GM12878 (cell line): ENCODE measurements at regions of chr4 and their contacts with region 1.

Region 1: DNA sequence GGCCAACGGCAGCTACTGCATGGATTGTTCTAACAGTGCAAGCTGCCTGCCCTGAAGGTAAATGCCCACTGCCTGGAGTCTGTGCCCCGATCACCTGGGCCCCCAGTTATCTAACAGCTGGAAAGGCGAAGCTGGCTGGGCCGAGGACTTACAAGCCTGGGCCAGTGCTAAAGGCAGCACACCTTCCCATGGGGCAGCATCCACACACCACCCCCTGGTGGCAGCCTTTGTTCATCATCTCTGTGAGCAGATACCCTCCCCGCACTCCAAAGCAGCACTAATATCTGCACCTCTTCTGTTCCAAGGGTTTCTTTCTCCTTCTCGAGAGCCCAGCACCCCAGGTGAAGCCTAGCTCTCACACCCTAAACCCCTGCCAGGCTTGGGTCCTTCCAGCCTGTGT is 7.6 kb downstream of the SLC2A9 start:
- DNase-seq: no peak
- ATAC-seq: peak; percentile 86
- H3K4me3 ChIP-seq: no peak overlapping the region
- H3K27ac ChIP-seq: no peak overlapping the region
- H3K4me1 ChIP-seq: peaks cover 8% of the 10 kb centered on the region; the same call in 1 of the 2 replicates
- H3K27me3 ChIP-seq: no peaks in the 10 kb centered on the region
- CTCF ChIP-seq: peak; percentile 72 to 78 (median 76)
- EP300 ChIP-seq: no peak
- POLR2A ChIP-seq: no peak
- RAD21 ChIP-seq: peak; percentile 80

Region 2: GRCh38 chr4:9762823-9763475 is 250.8 kb before region 1 on chr4:
- CTCF ChIA-PET with region 1: interaction called, 325 read pairs
- POLR2A ChIA-PET with region 1: interaction called, 3 read pairs
- RAD21 ChIA-PET with region 1: interaction called, 185 read pairs
- SMC1A ChIA-PET with region 1: interaction called, 159 read pairs
- in situ Hi-C with region 1: loop called (anchors 5 kb)
- intact Hi-C with region 1: loop called (anchors 1 kb)
- DNase-seq: peak; percentile 40
- ATAC-seq: peak; percentile 75
- H3K4me3 ChIP-seq: no peak overlapping the region
- H3K27ac ChIP-seq: no peak overlapping the region
- H3K4me1 ChIP-seq: no peaks in the 10 kb centered on the region
- H3K27me3 ChIP-seq: no peaks in the 10 kb centered on the region
- CTCF ChIP-seq: peak; percentile 69 to 88 (median 75)
- EP300 ChIP-seq: no peak
- POLR2A ChIP-seq: no peak
- RAD21 ChIP-seq: peak; percentile 99

Region 3: DNA sequence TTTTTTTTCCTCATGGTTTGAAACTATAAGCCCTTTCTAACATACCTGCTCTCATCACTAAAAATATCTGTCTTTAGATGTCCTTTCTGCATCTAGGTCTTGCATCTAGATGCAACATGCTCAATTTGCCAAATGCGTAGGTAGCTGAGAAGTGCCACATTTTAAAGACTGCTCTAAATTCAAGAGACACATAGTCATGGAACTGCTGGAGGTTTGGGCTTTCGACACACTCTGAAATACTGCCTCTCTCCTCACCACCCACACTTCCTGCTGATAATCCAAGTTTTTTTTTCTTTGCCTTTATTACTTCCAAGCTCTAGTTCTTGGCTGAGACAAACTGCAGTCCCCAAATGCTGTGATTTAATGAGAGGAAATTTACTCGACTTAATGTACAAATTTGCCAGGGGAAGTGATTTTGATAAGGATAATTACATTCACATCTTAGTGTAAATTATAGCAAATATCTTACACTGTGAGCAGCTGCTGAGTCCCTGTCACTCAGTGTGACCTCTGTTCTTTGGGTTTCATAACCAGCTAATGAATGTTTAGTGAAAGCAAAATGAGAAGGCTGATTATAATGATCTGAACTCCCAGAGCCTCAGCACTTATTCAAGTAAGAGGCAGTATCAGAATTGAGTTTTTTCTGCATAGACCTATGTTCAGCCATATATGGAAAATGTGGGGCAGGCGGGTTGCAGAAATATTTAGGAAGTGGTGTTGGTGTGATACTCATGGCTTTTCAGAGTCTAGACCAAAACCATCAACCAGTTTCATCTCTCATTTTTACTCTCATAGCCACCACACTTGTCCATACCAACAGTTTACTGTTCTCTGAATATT is 201.0 kb before region 1 on chr4:
- CTCF ChIA-PET with region 1: interaction called, 11 read pairs
- POLR2A ChIA-PET with region 1: interaction called, 4 read pairs
- RAD21 ChIA-PET with region 1: interaction called, 8 read pairs
- SMC1A ChIA-PET with region 1: interaction called, 11 read pairs
- in situ Hi-C with region 1: no loop called
- intact Hi-C with region 1: no loop called
- DNase-seq: peak; percentile 57
- ATAC-seq: peak; percentile 83
- H3K4me3 ChIP-seq: no peak overlapping the region
- H3K27ac ChIP-seq: no peak overlapping the region
- H3K4me1 ChIP-seq: peaks cover 3% of the 10 kb centered on the region; the same call in 1 of the 2 replicates
- H3K27me3 ChIP-seq: no peaks in the 10 kb centered on the region; a peak in 1 of 4 replicates
- CTCF ChIP-seq: no peak
- EP300 ChIP-seq: peak; percentile 72 to 87; a peak in 3 of 4 replicates
- POLR2A ChIP-seq: no peak
- RAD21 ChIP-seq: no peak

Region 4: DNA sequence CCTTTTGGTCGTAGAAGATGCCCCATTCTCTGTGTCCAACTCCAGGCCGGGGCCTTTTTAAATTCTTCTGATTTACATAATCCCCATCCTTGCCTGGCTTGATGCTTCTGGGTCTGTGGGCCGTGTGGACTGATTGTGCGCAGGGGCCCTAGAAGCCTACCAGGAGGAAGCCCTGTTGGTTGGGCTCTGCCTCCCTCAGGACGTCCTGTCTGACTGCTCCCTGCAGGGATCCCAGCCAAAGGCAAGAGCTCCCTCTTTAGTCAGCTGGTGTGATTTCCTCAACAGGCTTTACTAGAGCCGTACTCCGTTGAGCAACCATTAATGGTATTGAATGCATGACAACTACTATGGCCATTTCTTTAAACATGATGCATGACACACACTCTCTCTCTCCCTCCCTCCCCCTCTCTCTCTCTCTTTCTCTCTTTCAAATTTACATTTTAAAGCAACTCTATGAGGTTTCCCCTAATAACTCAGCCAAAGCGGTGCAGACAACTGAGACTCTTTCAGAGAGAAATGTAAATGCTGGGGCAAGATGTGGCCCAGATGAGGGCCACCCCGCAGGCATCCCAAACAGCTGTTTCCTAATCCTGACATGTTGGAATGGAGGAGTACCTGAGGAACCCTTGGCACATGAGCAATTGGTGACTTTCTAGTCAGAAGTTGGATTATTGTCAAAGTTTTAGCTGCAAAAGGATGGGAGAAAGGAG is 115.0 kb before region 1 on chr4:
- CTCF ChIA-PET with region 1: interaction called, 60 read pairs
- POLR2A ChIA-PET with region 1: no interaction called
- RAD21 ChIA-PET with region 1: interaction called, 31 read pairs
- SMC1A ChIA-PET with region 1: interaction called, 57 read pairs
- in situ Hi-C with region 1: no loop called
- intact Hi-C with region 1: loop called (anchors 2 kb)
- DNase-seq: no peak
- ATAC-seq: peak; percentile 72
- H3K4me3 ChIP-seq: no peak overlapping the region
- H3K27ac ChIP-seq: no peak overlapping the region
- H3K4me1 ChIP-seq: peaks cover 3% of the 10 kb centered on the region; the same call in 1 of the 2 replicates
- H3K27me3 ChIP-seq: no peaks in the 10 kb centered on the region
- CTCF ChIP-seq: peak in 2 of 3 experiments; percentile 10 to 62; a peak in 3 of 6 replicates
- EP300 ChIP-seq: no peak
- POLR2A ChIP-seq: no peak
- RAD21 ChIP-seq: peak; percentile 45

Region 5: DNA sequence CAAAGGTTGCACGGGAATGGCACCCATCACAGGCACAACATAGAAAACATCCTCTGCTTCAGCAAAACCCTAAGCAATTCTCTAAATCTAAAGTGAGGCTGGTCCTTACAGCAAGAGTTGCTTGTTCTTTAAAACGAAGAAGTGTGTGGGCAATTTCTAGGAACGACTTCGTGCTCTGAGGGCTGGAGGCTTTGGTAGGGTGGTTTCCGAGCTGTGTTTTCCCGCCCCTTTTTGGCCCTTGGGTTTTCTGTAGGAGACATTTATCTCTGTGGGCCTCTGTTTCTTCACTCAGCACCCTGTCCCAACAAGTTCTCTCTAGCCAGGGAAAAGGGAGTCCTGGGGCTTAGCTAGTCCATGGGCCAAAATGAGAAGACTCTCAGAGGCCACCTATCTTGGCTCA is 76.6 kb before region 1 on chr4:
- CTCF ChIA-PET with region 1: interaction called, 57 read pairs
- POLR2A ChIA-PET with region 1: no interaction called
- RAD21 ChIA-PET with region 1: interaction called, 28 read pairs
- SMC1A ChIA-PET with region 1: interaction called, 21 read pairs
- in situ Hi-C with region 1: no loop called
- intact Hi-C with region 1: no loop called
- DNase-seq: no peak
- ATAC-seq: no peak
- H3K4me3 ChIP-seq: no peak overlapping the region
- H3K27ac ChIP-seq: no peak overlapping the region
- H3K4me1 ChIP-seq: no peaks in the 10 kb centered on the region; the same call in 1 of the 2 replicates
- H3K27me3 ChIP-seq: no peaks in the 10 kb centered on the region
- CTCF ChIP-seq: no peak
- EP300 ChIP-seq: no peak
- POLR2A ChIP-seq: no peak
- RAD21 ChIP-seq: no peak

Region 6: GRCh38 chr4:9979101-9979701 is 34.5 kb before region 1 on chr4:
- CTCF ChIA-PET with region 1: interaction called, 10 read pairs
- POLR2A ChIA-PET with region 1: interaction called, 39 read pairs
- RAD21 ChIA-PET with region 1: interaction called, 9 read pairs
- SMC1A ChIA-PET with region 1: interaction called, 10 read pairs
- in situ Hi-C with region 1: no loop called
- intact Hi-C with region 1: no loop called
- DNase-seq: no peak
- ATAC-seq: peak; percentile 44
- H3K4me3 ChIP-seq: no peak overlapping the region
- H3K27ac ChIP-seq: no peak overlapping the region
- H3K4me1 ChIP-seq: no peaks in the 10 kb centered on the region; the same call in 1 of the 2 replicates
- H3K27me3 ChIP-seq: no peaks in the 10 kb centered on the region
- CTCF ChIP-seq: no peak
- EP300 ChIP-seq: no peak
- POLR2A ChIP-seq: no peak
- RAD21 ChIP-seq: no peak

Region 7: GRCh38 chr4:10032625-10033024 is 18.9 kb after region 1 on chr4:
- CTCF ChIA-PET with region 1: interaction called, 47 read pairs
- POLR2A ChIA-PET with region 1: no interaction called
- RAD21 ChIA-PET with region 1: interaction called, 4 read pairs
- SMC1A ChIA-PET with region 1: interaction called, 8 read pairs
- in situ Hi-C with region 1: no loop called
- intact Hi-C with region 1: no loop called
- DNase-seq: no peak
- ATAC-seq: peak; percentile 62
- H3K4me3 ChIP-seq: no peak overlapping the region
- H3K27ac ChIP-seq: no peak overlapping the region
- H3K4me1 ChIP-seq: no peaks in the 10 kb centered on the region
- H3K27me3 ChIP-seq: no peaks in the 10 kb centered on the region; a peak in 1 of 4 replicates
- CTCF ChIP-seq: no peak
- EP300 ChIP-seq: no peak
- POLR2A ChIP-seq: no peak
- RAD21 ChIP-seq: no peak

Region 8: GRCh38 chr4:10048941-10049697 is 35.4 kb after region 1 on chr4:
- CTCF ChIA-PET with region 1: no interaction called
- POLR2A ChIA-PET with region 1: no interaction called
- RAD21 ChIA-PET with region 1: no interaction called
- SMC1A ChIA-PET with region 1: no interaction called
- in situ Hi-C with region 1: no loop called
- intact Hi-C with region 1: no loop called
- DNase-seq: no peak
- ATAC-seq: no peak
- H3K4me3 ChIP-seq: no peak overlapping the region
- H3K27ac ChIP-seq: no peak overlapping the region
- H3K4me1 ChIP-seq: no peaks in the 10 kb centered on the region
- H3K27me3 ChIP-seq: no peaks in the 10 kb centered on the region
- CTCF ChIP-seq: no peak
- EP300 ChIP-seq: no peak
- POLR2A ChIP-seq: no peak
- RAD21 ChIP-seq: no peak

Region 9: DNA sequence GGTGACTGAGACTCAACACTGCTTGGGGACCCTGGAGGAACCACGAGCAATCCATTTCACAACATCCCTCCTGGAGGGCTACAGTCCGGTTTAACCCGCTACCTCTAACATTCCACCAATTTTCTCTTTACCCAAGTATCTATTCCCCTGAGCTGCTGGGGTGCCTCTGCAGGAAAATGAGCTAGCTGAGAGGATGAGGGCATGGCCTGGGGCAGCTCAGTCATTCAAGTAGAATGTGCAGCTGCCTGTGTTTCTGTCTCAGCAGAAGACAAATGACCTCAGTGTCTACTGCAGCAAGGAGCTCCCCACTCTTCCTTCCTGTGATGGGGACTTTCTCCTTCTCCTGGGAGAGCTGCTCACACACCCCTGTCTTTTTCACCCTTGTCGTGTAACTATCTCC is 322.7 kb after region 1 on chr4:
- CTCF ChIA-PET with region 1: no interaction called
- POLR2A ChIA-PET with region 1: no interaction called
- RAD21 ChIA-PET with region 1: no interaction called
- SMC1A ChIA-PET with region 1: no interaction called
- in situ Hi-C with region 1: no loop called
- intact Hi-C with region 1: no loop called
- DNase-seq: no peak
- ATAC-seq: no peak
- H3K4me3 ChIP-seq: no peak overlapping the region
- H3K27ac ChIP-seq: no peak overlapping the region
- H3K4me1 ChIP-seq: no peaks in the 10 kb centered on the region
- H3K27me3 ChIP-seq: no peaks in the 10 kb centered on the region
- CTCF ChIP-seq: no peak
- EP300 ChIP-seq: no peak
- POLR2A ChIP-seq: no peak
- RAD21 ChIP-seq: no peak